ENCODE measurements at regions of chr15 and their contacts with region 1.

Region 1: DNA sequence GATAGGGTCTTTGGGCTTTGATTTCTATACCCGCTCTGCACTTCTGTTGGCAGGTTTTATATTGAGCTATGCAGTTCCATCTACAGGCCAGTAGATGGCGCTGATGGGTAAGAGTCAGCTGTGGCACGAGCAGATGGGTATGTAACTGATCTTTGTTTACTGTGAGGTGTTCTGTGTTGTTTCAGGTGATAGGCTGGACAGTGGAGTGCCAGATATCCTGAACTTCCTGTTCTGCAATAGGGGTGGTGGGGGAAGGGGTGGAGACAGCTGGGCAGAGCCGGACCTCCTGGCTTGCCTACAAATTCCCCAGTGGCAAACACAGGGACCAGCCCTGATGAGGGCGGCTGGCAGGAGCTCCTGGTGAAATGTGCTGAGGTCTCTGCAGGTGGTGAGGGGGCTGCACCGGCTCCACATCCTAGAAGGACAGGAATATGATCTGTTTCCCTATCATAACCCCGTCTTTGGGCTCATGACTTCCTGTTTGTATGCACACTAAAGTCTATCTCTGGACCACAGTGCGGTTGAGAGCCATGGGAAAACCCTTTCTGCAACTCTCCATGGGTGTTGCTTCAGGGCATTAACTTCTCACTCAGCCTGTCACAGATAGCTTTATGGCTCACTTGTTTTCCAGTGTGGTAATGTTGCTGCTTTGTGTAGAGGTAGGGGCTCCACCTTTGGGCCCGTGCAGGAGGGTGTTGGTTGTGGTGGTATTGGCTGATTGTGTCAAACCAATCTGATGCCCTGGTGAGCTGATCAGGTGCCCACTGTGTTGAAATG is 13.4 kb upstream of the FAM98B start:
- DNase-seq: no peak
- H3K4me3 ChIP-seq: no peak overlapping the region
- H3K27me3 ChIP-seq: peaks cover 8% of the 10 kb centered on the region
- CTCF ChIP-seq: peak; percentile 92

Region 2: DNA sequence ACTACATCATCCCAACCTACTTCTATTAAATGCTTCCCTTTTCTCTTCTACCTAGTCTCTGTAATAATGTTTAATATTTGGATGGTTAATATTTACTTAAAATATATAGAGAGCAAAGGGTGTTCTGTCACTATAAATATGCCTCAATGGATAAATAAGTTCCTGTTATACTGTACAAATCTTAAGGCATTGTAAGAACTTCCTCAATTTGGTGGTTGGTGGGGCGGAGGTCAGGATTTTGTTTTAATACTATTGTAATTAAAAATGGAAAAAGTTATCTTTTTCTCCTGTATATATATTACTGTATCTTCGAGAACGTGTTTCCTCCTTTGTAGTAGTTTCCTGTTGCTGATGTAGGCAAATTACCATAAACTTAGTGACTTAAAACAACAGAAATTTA is 146.4 kb before region 1 on chr15:
- CTCF ChIA-PET with region 1: no interaction called
- POLR2A ChIA-PET with region 1: no interaction called
- DNase-seq: no peak
- H3K4me3 ChIP-seq: no peak overlapping the region
- H3K27me3 ChIP-seq: no peaks in the 10 kb centered on the region
- CTCF ChIP-seq: no peak

Region 3: DNA sequence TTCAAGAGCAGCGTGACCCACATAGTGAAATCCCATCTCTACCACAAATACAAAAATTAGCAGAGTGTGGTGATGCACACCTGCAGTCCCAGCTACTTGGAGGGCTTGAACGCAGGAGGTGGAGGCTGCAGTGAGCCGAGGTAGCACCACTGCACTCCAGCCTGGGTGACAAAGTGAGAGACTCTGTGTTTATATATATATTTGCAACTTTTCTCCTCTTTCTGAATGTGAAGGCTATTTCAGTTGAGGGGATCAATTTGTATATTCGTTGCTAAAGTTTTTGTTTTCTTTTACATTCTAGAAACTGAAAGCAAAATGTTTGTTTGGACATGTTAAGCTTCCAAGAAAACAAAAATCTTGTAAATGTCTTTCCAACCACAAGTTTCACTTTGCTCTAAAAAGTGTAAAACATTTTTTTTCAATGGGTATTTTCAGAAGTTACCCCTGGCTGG is 16.4 kb before region 1 on chr15:
- CTCF ChIA-PET with region 1: interaction called, 34 read pairs
- POLR2A ChIA-PET with region 1: interaction called, 5 read pairs
- DNase-seq: no peak
- H3K4me3 ChIP-seq: no peak overlapping the region
- H3K27me3 ChIP-seq: peaks cover 4% of the 10 kb centered on the region; the same call in 1 of the 2 replicates
- CTCF ChIP-seq: no peak

Region 4: DNA sequence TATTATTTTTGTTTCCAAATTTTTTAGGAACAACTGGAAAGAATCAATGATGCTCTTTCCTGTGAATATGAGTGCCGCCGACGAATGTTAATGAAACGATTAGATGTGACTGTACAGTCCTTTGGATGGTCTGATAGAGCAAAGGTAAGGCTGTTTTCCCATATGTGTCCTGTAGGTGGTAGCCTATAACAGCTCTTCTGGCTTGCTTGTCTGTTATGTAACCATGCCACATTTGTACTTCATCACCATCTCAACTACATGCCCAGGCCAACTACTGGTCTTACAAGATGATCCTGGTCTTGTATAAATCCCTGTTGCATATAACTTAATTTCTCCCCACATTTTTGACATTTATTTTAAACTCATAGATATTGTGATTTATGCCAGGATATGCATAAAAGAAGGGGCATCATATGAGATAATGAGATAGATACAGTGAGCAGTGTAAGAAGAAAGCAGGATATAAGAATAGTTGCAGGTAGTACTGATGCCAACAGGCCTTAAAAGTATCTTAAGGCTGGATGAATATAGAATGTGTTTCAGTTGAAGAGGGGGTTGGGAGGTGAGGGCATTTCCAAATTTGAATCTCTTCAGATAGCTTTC is 33.7 kb after region 1 on chr15:
- CTCF ChIA-PET with region 1: interaction called, 11 read pairs
- POLR2A ChIA-PET with region 1: no interaction called
- DNase-seq: peak; percentile 26
- H3K4me3 ChIP-seq: no peak overlapping the region
- H3K27me3 ChIP-seq: no peaks in the 10 kb centered on the region
- CTCF ChIP-seq: peak; percentile 71

Region 5: GRCh38 chr15:38690689-38691332 is 250.3 kb after region 1 on chr15:
- CTCF ChIA-PET with region 1: interaction called, 90 read pairs
- POLR2A ChIA-PET with region 1: interaction called, 3 read pairs
- DNase-seq: no peak
- H3K4me3 ChIP-seq: no peak overlapping the region
- H3K27me3 ChIP-seq: no peaks in the 10 kb centered on the region
- CTCF ChIP-seq: peak; percentile 80